ENCODE measurements at regions of chr18 and their contacts with region 1.

Region 1: DNA sequence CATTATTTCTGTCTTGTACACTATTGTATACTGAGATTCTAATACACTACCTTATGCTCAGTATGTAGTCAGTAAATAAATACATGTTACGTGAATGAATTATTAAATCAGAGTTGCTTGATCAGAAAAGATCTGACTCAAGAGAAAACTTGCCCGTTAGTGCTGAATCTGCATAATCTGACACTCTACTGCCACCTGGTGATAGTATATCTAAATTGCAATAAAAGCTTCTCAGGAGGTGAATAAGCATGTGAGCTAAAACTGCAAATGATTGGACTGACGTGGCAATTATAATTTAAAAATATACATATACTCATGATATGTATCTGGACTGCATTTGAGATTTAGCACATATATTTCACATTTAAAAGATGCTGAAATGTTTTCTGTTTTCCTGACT is 70.4 kb downstream of the KIAA1328 start:
- DNase-seq: no peak
- H3K4me3 Mint-ChIP-seq: no peak overlapping the region
- H3K27ac Mint-ChIP-seq: no peak overlapping the region
- H3K4me1 Mint-ChIP-seq: peaks cover 3% of the 10 kb centered on the region
- H3K27me3 Mint-ChIP-seq: no peaks in the 10 kb centered on the region

Region 2: GRCh38 chr18:36828630-36829361 is 70.5 kb before region 1 on chr18 and contains the starts of genes KIAA1328 and TPGS2:
- CTCF ChIA-PET with region 1: interaction called, 6 read pairs
- intact Hi-C with region 1: loop called (anchors 5 kb)
- DNase-seq: peak; percentile 88
- H3K4me3 Mint-ChIP-seq: peak within 1 kb of the TSS; percentile 82
- H3K27ac Mint-ChIP-seq: peak within 1 kb of the TSS; percentile 81
- H3K4me1 Mint-ChIP-seq: peaks cover 46% of the 10 kb centered on the region
- H3K27me3 Mint-ChIP-seq: no peaks in the 10 kb centered on the region
- total RNA-seq, gene KIAA1328: 7.2 to 7.8 TPM
- total RNA-seq, gene TPGS2: 71.5 to 73.4 TPM

Measured in activated naive CD4-positive, alpha-beta T cell treated with anti-CD3 and anti-CD28 coated beads for 36 hours (primary cell).